Activated naive CD8-positive, alpha-beta T cell treated with anti-CD3 and anti-CD28 coated beads, Interleukin-2, amount 10 ng/mL, durations not matched to agents 7 days and 5 days (primary cell): ENCODE measurements at regions of chr19 and their contacts with region 1.

Region 1: DNA sequence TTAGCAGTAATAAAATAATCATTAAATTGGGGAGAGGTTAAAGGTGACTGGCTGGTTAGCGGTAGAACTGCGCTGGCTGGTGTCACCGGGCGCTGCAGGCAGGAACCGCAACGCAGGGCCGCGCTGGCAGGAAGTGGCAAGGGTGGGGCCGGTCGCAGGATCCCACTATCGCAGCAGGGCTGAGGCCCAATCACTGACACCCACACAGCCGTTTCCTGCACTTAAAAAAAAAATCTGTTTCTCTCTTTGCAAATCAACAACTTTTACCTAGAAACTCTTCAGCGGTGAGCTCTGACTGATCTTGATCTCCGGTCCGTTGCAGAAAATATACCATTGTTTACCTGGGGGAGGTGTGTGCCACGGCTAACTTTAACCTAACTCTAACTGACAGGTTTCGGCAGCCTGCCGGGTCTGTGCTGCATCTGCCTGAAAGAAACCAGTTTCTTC is 46.9 kb downstream of the KLF2 start:
- DNase-seq: peak; percentile 93
- ATAC-seq: peak; percentile 56
- H3K4me3 Mint-ChIP-seq: no peak overlapping the region
- H3K27ac Mint-ChIP-seq: no peak overlapping the region
- H3K4me1 Mint-ChIP-seq: peaks cover 64% of the 10 kb centered on the region
- H3K27me3 Mint-ChIP-seq: peaks cover 4% of the 10 kb centered on the region

Region 2: DNA sequence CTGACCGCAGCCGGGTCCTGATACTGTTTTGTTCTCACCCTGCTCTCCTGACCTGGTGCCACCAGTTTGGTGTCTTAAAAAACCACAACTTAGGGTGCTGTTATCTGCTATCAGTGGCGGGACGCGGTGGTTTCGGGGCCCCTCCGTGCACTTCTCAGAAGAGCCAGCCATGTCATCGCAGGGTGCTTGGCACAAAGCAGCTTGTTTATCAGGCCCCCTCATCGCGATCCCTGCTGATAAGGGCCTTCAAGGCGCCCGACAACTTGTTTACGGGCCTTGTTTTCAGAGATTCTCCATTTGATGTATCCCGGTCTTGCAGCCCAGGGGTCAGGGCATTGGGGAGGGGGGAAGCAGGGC is 105.0 kb before region 1 on chr19:
- POLR2A ChIA-PET with region 1: interaction called, 10 read pairs
- DNase-seq: peak; percentile 68
- ATAC-seq: peak; percentile 76
- H3K4me3 Mint-ChIP-seq: peak overlapping the region; percentile 69
- H3K27ac Mint-ChIP-seq: peak overlapping the region; percentile 76
- H3K4me1 Mint-ChIP-seq: peaks cover 50% of the 10 kb centered on the region
- H3K27me3 Mint-ChIP-seq: peaks cover 44% of the 10 kb centered on the region

Region 3: GRCh38 chr19:16338470-16339360 is 32.8 kb before region 1 on chr19:
- POLR2A ChIA-PET with region 1: interaction called, 28 read pairs
- DNase-seq: peak; percentile 61
- ATAC-seq: peak; percentile 51
- H3K4me3 Mint-ChIP-seq: peak overlapping the region; percentile 81
- H3K27ac Mint-ChIP-seq: peak overlapping the region; percentile 84
- H3K4me1 Mint-ChIP-seq: peaks cover 46% of the 10 kb centered on the region
- H3K27me3 Mint-ChIP-seq: peaks cover 2% of the 10 kb centered on the region

Region 4: DNA sequence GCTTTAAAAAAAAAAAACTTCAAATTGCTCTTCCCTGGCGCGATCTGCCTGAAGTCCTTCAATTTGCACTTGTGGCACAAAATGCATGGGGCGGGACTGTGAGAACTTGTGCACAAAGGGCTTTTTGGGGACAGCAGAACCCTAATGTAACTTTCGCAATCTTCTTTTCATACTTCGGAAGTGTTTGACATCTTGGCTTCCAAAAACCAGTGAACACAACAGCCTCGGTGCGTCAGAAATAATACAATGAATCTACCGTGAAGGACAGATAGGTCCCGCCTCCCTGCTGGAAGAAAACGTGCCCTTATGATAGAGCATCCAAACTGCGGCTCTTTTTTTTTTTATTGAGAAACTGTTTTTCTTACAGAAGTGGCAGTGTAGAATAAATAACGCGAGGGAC is 10.3 kb before region 1 on chr19:
- POLR2A ChIA-PET with region 1: interaction called, 34 read pairs
- DNase-seq: no peak
- ATAC-seq: no peak
- H3K4me3 Mint-ChIP-seq: peak overlapping the region; percentile 57
- H3K27ac Mint-ChIP-seq: no peak overlapping the region
- H3K4me1 Mint-ChIP-seq: peaks cover 52% of the 10 kb centered on the region
- H3K27me3 Mint-ChIP-seq: peaks cover 20% of the 10 kb centered on the region

Region 5: DNA sequence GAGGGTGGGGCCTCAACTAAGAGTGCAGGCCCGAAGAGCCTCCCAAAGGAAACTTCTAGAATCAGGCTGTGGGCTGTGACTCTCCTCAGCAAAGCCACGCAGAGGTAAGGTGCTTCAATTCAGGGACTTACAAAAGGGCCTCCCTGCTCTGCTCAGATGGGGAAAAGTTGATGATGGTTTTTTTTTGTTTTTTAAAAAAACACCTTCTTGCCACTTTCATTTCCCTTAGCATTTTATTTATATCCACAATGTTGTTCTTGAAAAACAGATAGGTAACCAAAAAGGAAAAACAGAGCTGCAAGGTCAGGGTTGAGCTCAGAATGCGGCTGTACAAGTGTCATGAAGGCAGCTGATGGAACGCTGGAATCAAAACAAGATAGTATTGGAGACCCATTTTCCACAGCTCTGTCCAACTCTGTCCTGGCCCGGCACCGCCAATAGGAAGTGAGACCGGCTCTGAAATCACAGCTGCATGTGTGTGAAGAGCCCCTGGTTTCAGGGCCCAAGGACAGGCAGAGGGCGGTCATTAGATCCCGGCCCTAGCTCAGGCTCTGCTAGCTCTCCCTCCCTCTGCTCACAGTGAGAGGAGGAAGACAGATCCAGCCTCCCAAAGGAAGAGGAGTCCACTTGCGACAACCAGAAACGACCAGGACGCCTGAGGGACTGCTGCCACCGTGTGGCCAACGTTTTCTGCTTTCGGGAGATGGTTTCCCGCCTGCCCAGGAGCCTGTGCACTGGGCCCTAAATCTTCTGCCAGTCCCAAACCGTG is 11.4 kb after region 1 on chr19:
- POLR2A ChIA-PET with region 1: interaction called, 31 read pairs
- DNase-seq: peak; percentile 82
- ATAC-seq: peak; percentile 53
- H3K4me3 Mint-ChIP-seq: peak overlapping the region; percentile 11
- H3K27ac Mint-ChIP-seq: peak overlapping the region; percentile 43
- H3K4me1 Mint-ChIP-seq: peaks cover 24% of the 10 kb centered on the region
- H3K27me3 Mint-ChIP-seq: no peaks in the 10 kb centered on the region

Region 6: GRCh38 chr19:16417660-16418596 is 46.4 kb after region 1 on chr19:
- POLR2A ChIA-PET with region 1: no interaction called
- DNase-seq: peak; percentile 79
- ATAC-seq: peak; percentile 85
- H3K4me3 Mint-ChIP-seq: no peak overlapping the region
- H3K27ac Mint-ChIP-seq: no peak overlapping the region
- H3K4me1 Mint-ChIP-seq: peaks cover 3% of the 10 kb centered on the region
- H3K27me3 Mint-ChIP-seq: no peaks in the 10 kb centered on the region